Common myeloid progenitor, CD34-positive (primary cell): ENCODE measurements at regions of chr17 and their contacts with region 1.

Region 1: DNA sequence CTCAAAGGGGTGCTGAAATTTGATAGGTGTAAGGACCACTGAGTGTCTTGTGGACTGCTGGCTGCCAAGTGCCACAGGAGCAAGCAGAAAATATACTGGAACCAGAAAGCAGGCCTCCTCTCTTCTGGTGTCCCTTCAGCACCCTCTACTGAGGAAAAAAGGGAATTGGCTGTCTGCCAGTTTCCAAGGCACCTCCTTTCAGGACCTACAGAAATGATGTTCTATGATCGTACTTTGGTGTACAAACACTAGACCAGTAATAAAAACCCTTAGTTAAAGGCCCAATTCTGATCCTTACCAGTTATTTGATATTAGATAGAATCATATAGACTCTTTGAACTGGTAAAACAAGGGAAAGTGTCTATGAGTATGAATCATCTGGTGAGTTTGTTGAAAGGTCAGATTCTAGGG is 35.8 kb upstream of the BCAS3 start:
- DNase-seq: peak; percentile 83 to 90 (median 87)
- H3K4me3 ChIP-seq: no peak overlapping the region
- H3K27ac ChIP-seq: no peak overlapping the region
- H3K4me1 ChIP-seq: peaks cover 0 to 3% (median 1%) of the 10 kb centered on the region in 4 experiments
- H3K27me3 ChIP-seq: no peaks in the 10 kb centered on the region

Region 2: DNA sequence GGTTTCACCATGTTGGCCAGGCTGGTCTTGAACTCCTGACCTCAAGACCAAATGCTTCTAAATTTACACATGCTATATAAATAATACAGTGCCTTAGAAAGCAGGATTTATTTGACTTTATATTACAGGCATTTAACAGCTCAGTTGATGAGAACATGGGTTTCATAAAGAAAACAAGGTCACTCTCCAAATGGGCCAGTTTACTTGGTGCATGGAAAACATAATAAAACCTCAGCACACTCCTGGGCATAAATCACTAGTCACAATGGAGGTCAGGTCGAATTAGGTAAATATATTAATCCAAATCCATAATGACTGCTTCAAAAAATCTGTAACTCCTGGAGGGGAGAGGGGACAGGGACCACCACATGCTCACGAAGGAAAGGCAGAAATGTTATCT is 140.2 kb before region 1 on chr17:
- CTCF ChIA-PET with region 1: no interaction called
- POLR2A ChIA-PET with region 1: no interaction called
- DNase-seq: no peak
- H3K4me3 ChIP-seq: no peak overlapping the region
- H3K27ac ChIP-seq: no peak overlapping the region
- H3K4me1 ChIP-seq: peaks cover 0 to 7% (median 6%) of the 10 kb centered on the region in 4 experiments
- H3K27me3 ChIP-seq: no peaks in the 10 kb centered on the region

Region 3: GRCh38 chr17:60630352-60630751 is 11.5 kb before region 1 on chr17:
- CTCF ChIA-PET with region 1: interaction called, 23 read pairs
- POLR2A ChIA-PET with region 1: no interaction called
- DNase-seq: no peak
- H3K4me3 ChIP-seq: no peak overlapping the region
- H3K27ac ChIP-seq: no peak overlapping the region
- H3K4me1 ChIP-seq: peaks cover 0 to 3% (median 0%) of the 10 kb centered on the region in 4 experiments
- H3K27me3 ChIP-seq: no peaks in the 10 kb centered on the region

Region 4: GRCh38 chr17:60661489-60661888 is 19.7 kb after region 1 on chr17:
- CTCF ChIA-PET with region 1: no interaction called
- POLR2A ChIA-PET with region 1: no interaction called
- DNase-seq: no peak
- H3K4me3 ChIP-seq: no peak overlapping the region
- H3K27ac ChIP-seq: no peak overlapping the region
- H3K4me1 ChIP-seq: no peaks in the 10 kb centered on the region
- H3K27me3 ChIP-seq: no peaks in the 10 kb centered on the region